Activated CD4-positive, alpha-beta T cell treated with anti-CD3 and anti-CD28 coated beads for 36 hours (primary cell): ENCODE measurements at regions of chr5 and their contacts with region 1.

Region 1: DNA sequence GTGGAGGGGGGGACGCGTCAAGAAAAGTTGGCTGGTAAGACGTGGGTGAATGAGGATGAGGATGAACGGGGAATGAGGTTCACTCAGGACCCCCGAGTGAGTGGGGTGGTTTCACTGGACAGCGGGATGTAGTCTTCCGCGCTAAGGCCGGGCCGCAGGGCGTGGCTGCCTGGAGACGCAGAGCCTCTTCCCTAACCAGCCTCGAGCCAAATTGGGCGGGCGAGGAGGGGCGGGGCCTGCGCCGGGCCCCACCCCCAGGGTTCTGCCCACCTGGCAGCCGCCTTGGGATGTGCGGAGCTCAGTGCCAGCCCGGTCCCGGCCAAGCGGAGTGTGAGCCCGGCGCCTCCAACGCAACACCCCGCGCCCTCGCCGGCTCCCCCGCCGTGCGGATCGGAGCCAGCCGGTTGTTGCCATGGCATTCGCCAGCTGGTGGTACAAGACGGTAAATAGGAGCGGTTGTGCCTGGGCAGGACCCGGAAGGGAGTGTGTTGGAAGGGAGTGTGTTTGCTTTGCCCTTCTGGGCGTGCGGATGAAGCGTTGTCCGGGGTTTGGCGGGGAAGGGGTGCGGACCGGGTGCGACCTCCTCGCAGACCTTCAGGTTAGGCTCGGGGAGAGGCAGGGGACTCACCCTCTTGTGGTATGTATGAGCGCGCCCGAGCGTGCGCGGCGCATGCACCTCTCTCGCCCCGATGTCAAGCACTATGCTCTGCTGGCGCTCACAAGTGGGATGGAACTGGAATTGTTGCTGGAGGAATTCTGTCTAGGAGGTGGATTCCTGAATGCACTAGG is 743 bp downstream of the CAST start:
- DNase-seq: peak; percentile 92
- ATAC-seq: peak; percentile 80
- H3K4me3 Mint-ChIP-seq: peak overlapping the region; percentile 89
- H3K27ac Mint-ChIP-seq: peak overlapping the region; percentile 95
- H3K4me1 Mint-ChIP-seq: peaks cover 32% of the 10 kb centered on the region
- H3K27me3 Mint-ChIP-seq: peaks cover 6% of the 10 kb centered on the region

Region 2: GRCh38 chr5:95870105-95870672 is 792.7 kb before region 1 on chr5:
- CTCF ChIA-PET with region 1: no interaction called
- POLR2A ChIA-PET with region 1: interaction called, 3 read pairs
- intact Hi-C with region 1: loop called in 1 of 2 experiments (anchors 1 kb)
- DNase-seq: peak; percentile 70
- ATAC-seq: peak; percentile 78
- H3K4me3 Mint-ChIP-seq: peak overlapping the region; percentile 63
- H3K27ac Mint-ChIP-seq: peak overlapping the region; percentile 98
- H3K4me1 Mint-ChIP-seq: peaks cover 62% of the 10 kb centered on the region
- H3K27me3 Mint-ChIP-seq: no peaks in the 10 kb centered on the region

Region 3: DNA sequence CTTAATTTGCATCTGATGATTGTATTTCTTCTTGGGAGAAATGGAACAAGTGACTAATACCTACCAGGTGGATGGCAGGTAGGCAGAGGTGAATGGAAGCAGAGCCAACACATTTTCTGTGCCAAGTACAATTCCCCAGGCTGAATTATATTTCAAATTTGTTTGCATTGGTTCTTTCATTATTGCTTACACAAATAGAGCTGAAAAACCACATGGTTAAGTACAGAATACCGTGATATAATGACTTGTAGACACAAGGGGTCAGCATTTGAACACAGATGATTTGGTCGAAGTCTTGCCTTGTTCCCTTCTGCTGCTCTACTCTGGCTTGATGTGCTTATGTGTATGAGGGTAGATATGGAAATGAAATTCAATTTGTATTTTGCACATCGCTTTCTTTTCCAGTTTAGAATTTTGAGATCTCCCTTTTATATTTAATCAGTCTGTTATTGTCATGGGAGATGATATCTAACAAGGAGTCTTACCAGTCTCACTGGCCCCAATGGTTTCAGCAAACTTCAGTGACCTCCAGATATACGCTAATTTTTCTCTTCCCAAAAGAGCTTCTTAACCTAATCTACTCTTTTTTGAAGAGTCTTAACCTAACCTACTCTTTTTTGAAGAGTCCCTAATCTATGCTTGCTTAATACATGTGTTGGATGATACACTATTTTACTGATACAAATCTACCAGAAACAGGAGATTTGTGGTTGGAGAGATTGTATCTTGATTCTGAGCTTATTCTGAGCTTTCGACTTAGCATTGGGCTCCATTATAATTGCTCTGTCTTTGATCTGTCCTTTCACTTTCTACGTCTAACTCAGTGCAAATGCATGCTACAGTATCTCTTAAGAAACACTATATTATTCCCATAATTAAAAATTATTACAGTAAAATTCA is 318.0 kb before region 1 on chr5:
- CTCF ChIA-PET with region 1: no interaction called
- POLR2A ChIA-PET with region 1: no interaction called
- intact Hi-C with region 1: loop called in 1 of 2 experiments (anchors 1 kb)
- DNase-seq: peak; percentile 12
- ATAC-seq: peak; percentile 89
- H3K4me3 Mint-ChIP-seq: peak overlapping the region; percentile 15
- H3K27ac Mint-ChIP-seq: no peak overlapping the region
- H3K4me1 Mint-ChIP-seq: peaks cover 28% of the 10 kb centered on the region
- H3K27me3 Mint-ChIP-seq: peaks cover 10% of the 10 kb centered on the region

Region 4: GRCh38 chr5:96687812-96688453 is 25.0 kb after region 1 on chr5:
- CTCF ChIA-PET with region 1: interaction called, 3 read pairs
- POLR2A ChIA-PET with region 1: interaction called, 3 read pairs
- intact Hi-C with region 1: loop called in 1 of 2 experiments (anchors 1 kb)
- DNase-seq: no peak
- ATAC-seq: peak; percentile 93
- H3K4me3 Mint-ChIP-seq: no peak overlapping the region
- H3K27ac Mint-ChIP-seq: no peak overlapping the region
- H3K4me1 Mint-ChIP-seq: peaks cover 23% of the 10 kb centered on the region
- H3K27me3 Mint-ChIP-seq: no peaks in the 10 kb centered on the region

Region 5: DNA sequence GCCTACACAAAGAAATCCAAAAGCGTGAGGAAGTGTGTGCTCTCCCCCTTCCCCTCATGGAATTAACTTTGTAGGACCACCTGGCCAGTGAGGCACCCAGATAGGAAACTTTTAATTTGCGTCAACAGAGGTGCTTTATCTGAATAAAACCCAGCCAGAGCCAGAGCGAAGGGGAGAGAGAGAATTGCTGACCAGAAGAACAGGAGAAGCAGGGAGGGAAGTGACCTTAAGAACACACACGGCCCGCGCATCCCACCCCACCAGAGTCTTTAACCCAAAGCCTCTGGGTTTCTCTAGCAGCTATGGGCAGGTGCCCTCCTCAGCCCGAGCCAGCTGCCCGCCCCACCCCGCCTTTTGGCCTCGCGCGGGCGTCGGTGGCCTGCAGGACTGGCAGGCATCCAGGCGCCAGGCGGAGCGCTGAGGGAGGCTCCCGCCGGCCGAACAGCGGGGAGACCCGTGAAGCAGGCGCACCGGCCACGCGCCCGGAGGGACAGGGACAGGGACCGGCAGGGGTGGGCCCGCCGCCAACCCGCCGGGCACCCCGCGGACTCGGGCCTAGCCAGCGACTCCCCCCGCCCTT is 144.2 kb after region 1 on chr5:
- CTCF ChIA-PET with region 1: no interaction called
- POLR2A ChIA-PET with region 1: interaction called, 5 read pairs
- intact Hi-C with region 1: loop called (anchors 1 to 5 kb)
- DNase-seq: peak; percentile 65
- ATAC-seq: peak; percentile 5
- H3K4me3 Mint-ChIP-seq: peak overlapping the region; percentile 89
- H3K27ac Mint-ChIP-seq: peak overlapping the region; percentile 94
- H3K4me1 Mint-ChIP-seq: peaks cover 55% of the 10 kb centered on the region
- H3K27me3 Mint-ChIP-seq: no peaks in the 10 kb centered on the region

Region 6: DNA sequence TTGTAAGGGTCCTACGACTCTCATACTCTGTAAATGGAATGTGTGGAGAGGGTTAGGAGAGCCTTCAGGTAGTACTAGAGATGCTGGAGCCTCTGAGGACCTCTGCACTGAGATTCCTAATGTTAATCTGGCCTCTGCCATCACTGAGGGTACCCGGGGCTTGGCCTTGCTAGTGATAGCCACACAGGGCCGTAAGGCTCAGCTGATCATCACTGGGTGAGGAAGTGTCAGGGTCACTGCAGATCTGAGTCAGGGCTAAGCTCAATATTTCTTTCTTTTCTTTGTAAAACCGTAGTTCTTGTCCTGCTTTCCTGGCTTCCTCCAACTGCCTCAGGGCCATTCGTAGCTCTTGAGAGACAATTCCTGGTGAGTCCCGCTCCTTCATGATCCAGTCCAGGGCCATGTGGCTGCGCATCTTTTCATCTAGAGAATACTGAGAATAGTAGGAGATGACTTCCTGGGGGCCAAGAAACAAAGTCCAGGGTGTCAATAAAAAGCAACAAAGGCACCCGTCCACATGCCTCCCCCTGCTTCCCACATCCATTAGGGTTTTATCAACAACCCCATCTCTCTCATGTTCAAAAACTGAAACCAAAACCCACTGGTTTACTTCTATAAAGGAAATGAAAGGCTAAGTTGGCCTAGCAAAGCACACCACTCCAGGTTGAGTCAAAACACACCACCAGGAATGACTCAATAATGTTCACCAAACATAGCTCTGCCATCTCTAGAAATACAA is 431.8 kb after region 1 on chr5:
- CTCF ChIA-PET with region 1: no interaction called
- POLR2A ChIA-PET with region 1: no interaction called
- intact Hi-C with region 1: loop called in 1 of 2 experiments (anchors 1 kb)
- DNase-seq: peak; percentile 59
- ATAC-seq: peak; percentile 99
- H3K4me3 Mint-ChIP-seq: no peak overlapping the region
- H3K27ac Mint-ChIP-seq: peak overlapping the region; percentile 15
- H3K4me1 Mint-ChIP-seq: peaks cover 16% of the 10 kb centered on the region
- H3K27me3 Mint-ChIP-seq: peaks cover 10% of the 10 kb centered on the region